ENCODE measurements at regions of chr13 and their contacts with region 1.

Region 1: DNA sequence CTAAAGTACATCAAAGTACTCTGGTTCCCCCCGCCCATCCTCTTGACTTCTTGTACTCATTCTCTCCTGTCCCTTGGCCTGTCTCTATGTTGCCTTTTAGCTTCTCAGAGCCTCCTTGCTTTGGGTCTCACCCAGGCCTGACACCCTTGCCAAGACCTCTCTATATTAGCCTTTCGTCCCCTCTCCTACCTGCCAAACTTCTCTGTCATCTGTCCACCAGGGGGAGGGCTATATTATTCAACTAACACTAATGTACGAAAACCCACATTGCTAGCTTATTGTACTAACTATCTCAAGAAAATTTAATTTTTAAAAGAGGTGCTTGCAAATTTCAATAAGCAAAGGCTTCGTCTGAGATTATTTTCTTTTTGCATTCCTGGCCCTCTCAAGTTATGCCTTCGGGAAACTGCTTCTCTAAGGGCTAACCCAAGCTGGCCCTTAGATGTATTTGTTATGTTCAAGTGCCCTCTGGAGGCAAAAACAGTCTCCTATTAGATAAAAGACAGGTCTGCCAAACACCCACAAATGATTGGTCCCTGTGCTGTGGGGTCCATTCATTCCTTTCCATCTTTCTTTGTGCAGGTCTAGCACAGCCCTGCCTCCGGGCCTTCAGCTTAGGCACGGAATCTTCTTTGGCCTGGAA is 6.3 kb upstream of the MRPS31 start:
- DNase-seq: peak; percentile 48
- H3K4me3 Mint-ChIP-seq: peak overlapping the region; percentile 77
- H3K27ac Mint-ChIP-seq: peak overlapping the region; percentile 99
- H3K4me1 Mint-ChIP-seq: peaks cover 25% of the 10 kb centered on the region
- H3K27me3 Mint-ChIP-seq: no peaks in the 10 kb centered on the region

Region 2: DNA sequence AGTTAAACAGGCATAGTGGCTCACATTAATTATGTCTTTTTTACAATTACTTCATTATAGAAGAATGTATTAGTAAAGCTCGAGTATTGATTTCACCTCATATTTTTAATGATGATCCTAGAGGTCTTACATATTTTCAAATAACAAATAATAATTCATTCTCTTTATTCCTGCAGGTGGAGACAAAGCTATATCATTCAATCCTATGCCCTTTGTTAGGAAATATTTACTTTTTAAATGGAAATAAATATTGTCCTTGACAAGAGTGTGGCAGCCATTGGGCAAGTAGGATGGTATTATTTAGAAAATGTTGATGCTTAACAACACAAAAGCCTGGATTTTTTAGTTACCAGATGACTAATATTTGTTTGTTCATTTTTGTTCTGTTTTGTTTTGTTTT is 994.2 kb before region 1 on chr13:
- CTCF ChIA-PET with region 1: no interaction called
- intact Hi-C with region 1: loop called (anchors 1 kb)
- DNase-seq: no peak
- H3K4me3 Mint-ChIP-seq: no peak overlapping the region
- H3K27ac Mint-ChIP-seq: no peak overlapping the region
- H3K4me1 Mint-ChIP-seq: peaks cover 26% of the 10 kb centered on the region
- H3K27me3 Mint-ChIP-seq: no peaks in the 10 kb centered on the region

Region 3: DNA sequence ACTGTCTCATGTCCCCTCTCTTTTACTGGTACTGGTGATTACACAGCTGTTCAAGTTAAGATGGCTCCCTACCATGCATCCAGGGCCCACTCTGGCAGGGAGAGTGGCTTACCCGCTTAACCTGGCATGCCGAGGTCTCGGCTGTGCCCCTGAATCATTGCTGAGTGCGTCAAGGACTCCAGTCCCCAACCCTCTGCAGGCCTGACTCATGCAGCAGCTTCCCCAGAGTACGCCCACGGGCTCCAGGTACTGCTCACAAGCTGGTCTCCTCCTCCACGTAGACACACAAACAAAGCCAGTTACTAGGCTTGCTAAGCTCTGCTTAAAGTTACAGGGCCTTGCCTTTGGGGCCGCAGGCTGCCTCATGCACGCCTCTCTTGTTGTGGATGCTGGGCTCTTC is 674.4 kb before region 1 on chr13:
- CTCF ChIA-PET with region 1: no interaction called
- intact Hi-C with region 1: loop called (anchors 2 kb)
- DNase-seq: peak; percentile 97
- H3K4me3 Mint-ChIP-seq: peak overlapping the region; percentile 66
- H3K27ac Mint-ChIP-seq: peak overlapping the region; percentile 97
- H3K4me1 Mint-ChIP-seq: peaks cover 37% of the 10 kb centered on the region
- H3K27me3 Mint-ChIP-seq: no peaks in the 10 kb centered on the region

Region 4: GRCh38 chr13:40388617-40389016 is 388.7 kb before region 1 on chr13:
- CTCF ChIA-PET with region 1: no interaction called
- intact Hi-C with region 1: loop called (anchors 1 kb)
- DNase-seq: peak; percentile 94
- H3K4me3 Mint-ChIP-seq: peak overlapping the region; percentile 77
- H3K27ac Mint-ChIP-seq: peak overlapping the region; percentile 92
- H3K4me1 Mint-ChIP-seq: peaks cover 51% of the 10 kb centered on the region
- H3K27me3 Mint-ChIP-seq: no peaks in the 10 kb centered on the region

Region 5: GRCh38 chr13:40706439-40706838 is 70.8 kb before region 1 on chr13:
- CTCF ChIA-PET with region 1: interaction called, 3 read pairs
- intact Hi-C with region 1: loop called (anchors 2 kb)
- DNase-seq: peak; percentile 15
- H3K4me3 Mint-ChIP-seq: no peak overlapping the region
- H3K27ac Mint-ChIP-seq: no peak overlapping the region
- H3K4me1 Mint-ChIP-seq: peaks cover 12% of the 10 kb centered on the region
- H3K27me3 Mint-ChIP-seq: no peaks in the 10 kb centered on the region

Region 6: DNA sequence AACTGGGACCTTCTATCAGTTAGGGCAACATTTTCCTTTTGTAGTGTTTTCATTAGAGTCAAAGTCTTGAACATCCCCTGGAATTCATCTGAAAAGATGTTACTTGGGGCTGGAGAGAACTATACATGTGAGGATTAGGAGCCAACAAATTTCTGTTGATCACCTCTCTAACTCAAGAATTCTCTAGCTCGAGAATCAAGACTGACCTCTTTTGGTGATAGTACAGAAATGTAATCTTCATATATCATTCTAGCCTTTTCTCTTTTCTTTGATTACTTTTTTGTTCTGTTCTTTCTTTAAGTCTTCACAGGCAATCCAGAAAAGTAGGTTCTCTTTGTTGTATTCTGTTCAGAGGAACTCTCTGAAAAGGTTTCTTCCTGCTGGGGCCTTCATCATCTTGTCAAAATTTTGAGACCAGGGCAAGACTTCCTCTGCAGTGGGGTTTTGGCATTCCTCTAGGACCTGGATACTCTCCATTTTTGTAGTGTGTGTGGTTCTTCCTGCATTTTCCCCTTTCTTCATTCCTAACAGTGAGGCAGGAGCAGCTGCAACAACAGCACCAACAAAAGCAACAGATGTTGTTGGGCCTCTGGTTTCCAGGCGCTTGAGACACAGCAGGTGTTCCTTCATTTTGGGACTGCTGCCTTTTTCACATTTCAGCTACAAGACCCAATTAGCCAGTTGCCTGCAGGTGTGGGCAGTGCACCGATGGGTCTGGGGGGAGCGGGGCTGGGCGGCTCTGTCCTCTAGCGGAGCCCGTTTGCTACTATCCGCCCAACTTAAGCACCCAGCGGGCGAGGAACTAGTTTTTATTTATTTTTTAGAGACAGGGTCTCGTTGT is 215.6 kb after region 1 on chr13:
- CTCF ChIA-PET with region 1: interaction called, 3 read pairs
- intact Hi-C with region 1: loop called (anchors 1 kb)
- DNase-seq: no peak
- H3K4me3 Mint-ChIP-seq: no peak overlapping the region
- H3K27ac Mint-ChIP-seq: peak overlapping the region; percentile 69
- H3K4me1 Mint-ChIP-seq: peaks cover 90% of the 10 kb centered on the region
- H3K27me3 Mint-ChIP-seq: no peaks in the 10 kb centered on the region